ENCODE measurements at regions of chr1 and their contacts with region 1.

Region 1: GRCh38 chr1:153658400-153659174 is at the start of gene SNAPIN:
- DNase-seq: peak; percentile 95
- H3K4me3 Mint-ChIP-seq: peak within 1 kb of the TSS; percentile 97
- H3K27ac Mint-ChIP-seq: peak within 1 kb of the TSS; percentile 94
- H3K4me1 Mint-ChIP-seq: peaks cover 15% of the 10 kb centered on the region
- H3K27me3 Mint-ChIP-seq: no peaks in the 10 kb centered on the region
- total RNA-seq, gene SNAPIN: 24.4 to 26.2 TPM

Region 2: DNA sequence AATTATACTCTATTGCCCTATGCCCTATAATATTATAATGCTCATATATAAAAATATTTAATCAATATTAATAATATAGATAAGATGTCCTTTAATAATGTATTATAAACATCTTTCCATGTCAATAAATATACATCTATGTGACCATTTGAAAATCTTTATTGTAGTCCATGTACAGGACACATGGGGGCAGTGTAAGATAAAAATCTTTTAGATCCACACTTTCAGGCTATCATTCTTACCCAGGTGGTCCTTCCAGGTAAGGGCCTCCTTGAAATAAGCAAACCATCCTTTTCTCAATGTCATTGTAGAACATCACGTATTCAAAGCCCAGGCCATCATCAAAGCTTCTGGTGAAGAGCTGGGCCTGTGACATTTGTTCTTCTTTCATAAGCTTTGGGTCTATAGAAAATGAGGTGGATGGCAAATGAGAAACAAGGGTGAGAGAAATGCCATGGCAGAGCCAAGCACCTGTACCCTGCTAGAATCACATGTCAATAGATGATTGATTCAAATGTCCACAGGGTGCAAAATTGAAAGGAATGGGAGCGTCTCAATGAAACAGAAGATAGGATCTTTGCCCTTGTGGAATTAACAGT is 1769.5 kb before region 1 on chr1:
- CTCF ChIA-PET with region 1: no interaction called
- intact Hi-C with region 1: no loop called
- DNase-seq: no peak
- H3K4me3 Mint-ChIP-seq: no peak overlapping the region
- H3K27ac Mint-ChIP-seq: no peak overlapping the region
- H3K4me1 Mint-ChIP-seq: peaks cover 27% of the 10 kb centered on the region
- H3K27me3 Mint-ChIP-seq: no peaks in the 10 kb centered on the region

Region 3: GRCh38 chr1:153633716-153634665 is 24.6 kb before region 1 on chr1 and contains the start of gene CHTOP:
- CTCF ChIA-PET with region 1: interaction called, 5 read pairs
- intact Hi-C with region 1: loop called (anchors 1 kb)
- DNase-seq: peak; percentile 98
- H3K4me3 Mint-ChIP-seq: peak within 1 kb of the TSS; percentile 90
- H3K27ac Mint-ChIP-seq: peak within 1 kb of the TSS; percentile 100
- H3K4me1 Mint-ChIP-seq: peaks cover 45% of the 10 kb centered on the region
- H3K27me3 Mint-ChIP-seq: no peaks in the 10 kb centered on the region
- total RNA-seq, gene CHTOP: 88.2 to 91.3 TPM